ENCODE measurements at regions of chr1 and their contacts with region 1.

Region 1: DNA sequence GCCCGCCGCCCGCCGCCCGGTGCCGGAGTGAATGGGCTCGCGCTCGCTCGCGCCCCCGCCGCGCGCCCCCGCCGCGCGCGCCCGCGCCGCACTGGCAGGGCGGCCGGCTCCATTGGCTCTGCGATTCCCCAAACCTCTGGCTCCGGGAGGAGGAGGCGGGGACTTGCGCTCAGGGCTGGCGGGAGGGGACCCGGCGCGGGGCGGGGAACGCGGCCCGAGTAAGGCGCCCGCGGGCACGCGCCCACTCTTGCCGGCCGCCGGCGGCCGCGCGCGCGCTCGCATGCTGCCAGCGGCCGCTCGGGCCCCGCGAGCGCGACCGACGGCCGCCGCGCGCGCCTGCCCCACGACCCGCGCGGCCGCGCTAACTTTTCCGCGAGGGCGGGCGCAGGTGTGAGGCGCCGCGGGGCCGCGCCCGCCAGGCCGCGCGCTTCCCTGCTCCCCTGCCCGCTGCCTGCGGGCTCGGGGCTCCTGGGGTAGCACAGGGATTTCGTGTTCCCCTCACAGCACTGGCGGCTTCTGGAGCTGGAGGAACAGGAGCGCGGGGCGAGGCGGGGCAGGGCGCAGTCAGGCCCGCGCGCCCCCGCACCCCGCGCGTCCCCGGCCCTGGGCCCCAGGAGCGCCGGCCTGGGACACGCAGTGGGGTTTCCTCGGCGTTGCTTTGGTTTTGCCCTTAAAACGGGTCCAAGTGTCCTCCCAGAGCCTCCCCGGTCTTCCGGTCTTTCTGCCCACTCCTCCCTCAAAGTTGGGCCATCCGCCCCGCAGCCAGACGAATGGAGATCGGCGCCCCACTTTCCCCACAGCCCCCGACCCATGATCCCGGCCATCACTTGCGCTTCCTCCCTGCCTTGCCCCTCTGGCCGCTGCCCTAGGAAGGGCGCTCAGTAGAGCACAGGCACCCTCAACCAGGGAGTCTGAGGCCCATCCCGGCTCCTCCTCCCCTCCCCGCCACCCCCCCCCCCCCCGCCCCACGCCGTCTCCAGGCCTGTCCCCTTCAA is 101.5 kb downstream of the CASZ1 start:
- DNase-seq: peak; percentile 95

Region 2: GRCh38 chr1:9823943-9824701 is 870.8 kb before region 1 on chr1 and contains the start of gene CLSTN1:
- intact Hi-C with region 1: loop called (anchors 10 kb)
- DNase-seq: peak; percentile 92
- total RNA-seq, gene CLSTN1: 59.1 TPM

Region 3: DNA sequence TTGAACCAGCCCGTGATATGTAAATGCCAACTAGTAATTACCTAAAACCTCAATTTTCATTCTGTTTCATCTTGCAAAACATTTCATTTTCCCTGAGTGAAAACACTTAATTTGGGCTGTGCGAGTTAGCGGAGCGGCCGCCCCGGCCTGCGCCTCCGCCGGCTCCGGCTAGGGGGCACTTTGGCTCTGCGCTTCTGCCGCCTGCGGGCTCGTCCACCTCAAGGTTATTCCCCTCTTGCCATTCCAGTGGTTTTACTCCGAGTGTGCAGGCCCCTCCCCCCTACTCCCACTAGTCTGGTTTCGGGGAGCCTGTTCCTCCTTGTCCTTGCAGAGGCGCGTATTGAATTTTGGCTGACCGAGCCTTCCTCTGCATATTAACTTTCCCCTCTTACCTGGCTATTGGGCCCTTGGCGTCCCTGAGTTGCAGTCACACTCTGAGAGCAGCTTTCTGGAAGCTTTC is 164.6 kb before region 1 on chr1:
- intact Hi-C with region 1: loop called (anchors 5 kb)
- DNase-seq: no peak

Region 4: DNA sequence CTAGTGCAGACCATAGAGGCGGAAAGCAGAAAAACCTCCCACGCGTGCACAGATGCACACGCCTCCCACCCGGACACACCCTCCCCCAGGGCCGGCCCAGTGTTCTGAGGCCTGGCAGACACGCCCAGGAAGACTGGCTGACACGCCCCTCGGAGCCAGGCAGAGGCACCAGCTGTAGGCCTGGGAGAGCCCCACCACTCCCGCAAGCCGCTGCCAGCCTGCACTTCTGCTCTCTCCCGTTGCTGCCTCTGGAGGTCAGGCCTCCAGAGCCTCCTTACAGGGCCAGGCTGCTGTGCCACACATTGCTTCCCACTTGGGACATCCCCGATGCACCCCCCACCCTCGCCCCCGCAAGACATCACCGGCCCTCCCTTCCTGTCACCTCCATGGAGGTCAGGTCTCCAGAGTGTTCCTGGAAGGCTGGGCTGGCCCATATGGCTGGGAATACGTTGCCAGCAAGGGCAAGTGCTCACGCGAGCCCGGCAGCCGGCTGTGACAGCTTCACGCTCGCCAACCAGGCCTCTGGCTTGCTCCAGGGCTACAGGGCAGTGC is 61.1 kb after region 1 on chr1:
- intact Hi-C with region 1: no loop called
- DNase-seq: peak; percentile 86

Region 5: DNA sequence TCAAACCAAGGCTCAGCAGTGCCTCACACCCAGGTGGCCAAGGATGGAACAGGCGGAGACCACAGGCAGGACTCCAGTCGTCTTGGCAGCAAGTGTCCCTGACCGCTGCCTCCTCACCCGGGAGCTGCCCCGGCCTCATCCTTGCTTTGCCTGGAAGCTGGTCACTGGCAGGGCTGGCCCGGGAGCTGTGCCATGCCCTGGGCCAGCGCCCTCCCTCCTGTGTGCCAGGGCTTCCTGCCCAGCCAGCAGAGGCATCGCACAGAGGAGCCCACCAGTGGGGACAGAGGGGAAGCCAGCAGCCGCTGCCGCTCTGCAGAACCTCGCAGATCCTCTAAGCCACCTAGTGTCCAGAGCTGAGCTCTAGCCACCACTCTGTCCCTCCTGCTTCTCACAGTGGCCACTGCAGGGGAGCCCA is 93.7 kb after region 1 on chr1:
- intact Hi-C with region 1: loop called (anchors 2 kb)
- DNase-seq: peak; percentile 89

Region 6: DNA sequence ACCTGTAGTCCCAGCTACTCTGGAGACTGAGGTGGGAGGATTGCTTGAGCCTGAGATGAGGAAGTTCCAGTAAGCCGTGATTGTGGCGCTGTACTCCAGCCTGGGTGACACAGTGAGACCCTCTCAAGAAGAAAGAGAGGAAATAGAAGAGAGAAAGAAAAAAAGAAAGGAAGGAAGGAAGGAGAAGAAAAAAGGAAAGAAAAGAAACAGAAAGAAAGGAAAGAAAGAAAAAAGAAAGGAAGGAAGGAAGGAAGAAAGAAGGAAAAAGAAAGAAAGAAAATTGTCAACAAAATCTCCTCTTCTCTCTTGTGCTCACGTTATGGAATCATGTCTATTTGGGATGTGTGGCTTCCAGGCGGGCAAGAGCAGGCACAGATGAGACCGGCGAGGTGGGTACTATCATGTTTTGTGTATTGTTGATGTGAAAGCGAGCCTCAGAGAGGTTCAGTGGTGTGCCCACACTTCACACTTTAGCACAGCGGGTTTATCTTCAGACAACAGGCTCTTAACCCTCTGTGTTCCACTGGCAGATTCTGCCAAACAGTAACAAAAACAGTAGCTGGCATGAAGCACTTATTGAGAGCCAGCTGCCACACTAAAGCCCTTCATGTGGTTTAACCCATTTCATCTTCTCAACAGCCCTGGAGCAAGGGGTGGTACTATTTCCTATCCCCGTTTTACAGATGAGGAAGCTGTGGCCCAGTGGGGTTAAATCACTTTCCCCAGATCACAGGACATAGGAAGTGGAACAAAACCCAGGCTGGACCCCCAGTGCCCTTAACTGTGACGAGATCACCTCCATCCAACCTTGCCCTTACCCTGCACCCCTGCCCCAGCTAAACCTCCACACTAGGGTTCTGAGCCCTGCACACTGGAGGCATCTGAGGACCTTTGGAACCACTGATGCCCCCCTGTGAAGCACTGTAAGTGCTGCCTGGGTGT is 222.9 kb after region 1 on chr1:
- intact Hi-C with region 1: no loop called
- DNase-seq: no peak

Region 7: DNA sequence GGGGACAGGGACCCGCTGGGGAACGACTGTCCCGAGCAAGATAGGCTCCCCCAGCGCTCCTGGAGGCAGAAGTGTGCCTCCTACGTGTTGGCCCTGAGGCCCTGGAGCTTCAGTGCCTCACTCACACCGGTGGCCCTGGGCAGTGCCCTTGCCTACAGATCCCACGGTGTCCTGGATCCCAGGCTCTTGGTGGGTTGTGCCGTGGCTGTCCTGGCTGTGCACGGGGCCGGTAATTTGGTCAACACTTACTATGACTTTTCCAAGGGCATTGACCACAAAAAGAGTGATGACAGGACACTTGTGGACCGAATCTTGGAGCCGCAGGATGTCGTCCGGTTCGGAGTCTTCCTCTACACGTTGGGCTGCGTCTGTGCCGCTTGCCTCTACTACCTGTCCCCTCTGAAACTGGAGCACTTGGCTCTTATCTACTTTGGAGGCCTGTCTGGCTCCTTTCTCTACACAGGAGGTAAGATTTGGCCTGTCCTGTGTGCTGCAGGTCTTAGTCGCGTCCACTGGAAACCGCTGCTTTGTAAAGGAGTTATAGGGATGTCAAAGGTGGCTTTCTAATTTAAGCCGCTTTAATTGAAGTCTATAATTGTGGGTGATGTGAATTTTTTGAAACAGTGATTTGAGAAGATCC is 578.8 kb after region 1 on chr1:
- intact Hi-C with region 1: no loop called
- DNase-seq: no peak

Measured in cardiac septum (tissue), 1 donor.